Activated B cell treated with CpG ODN at 0.5 μM for 24 hours (primary cell): ENCODE measurements at regions of chr15 and their contacts with region 1.

Region 1: GRCh38 chr15:85380217-85380811 is at the start of gene AKAP13:
- DNase-seq: peak; percentile 80
- ATAC-seq: peak; percentile 81
- H3K4me3 Mint-ChIP-seq: peak within 1 kb of the TSS; percentile 93
- H3K27ac Mint-ChIP-seq: peak within 1 kb of the TSS; percentile 94
- H3K4me1 Mint-ChIP-seq: peaks cover 42% of the 10 kb centered on the region
- H3K27me3 Mint-ChIP-seq: no peaks in the 10 kb centered on the region
- CTCF ChIP-seq: no peak
- total RNA-seq, gene AKAP13: 254 and 290 TPM in 2 replicates

Region 2: DNA sequence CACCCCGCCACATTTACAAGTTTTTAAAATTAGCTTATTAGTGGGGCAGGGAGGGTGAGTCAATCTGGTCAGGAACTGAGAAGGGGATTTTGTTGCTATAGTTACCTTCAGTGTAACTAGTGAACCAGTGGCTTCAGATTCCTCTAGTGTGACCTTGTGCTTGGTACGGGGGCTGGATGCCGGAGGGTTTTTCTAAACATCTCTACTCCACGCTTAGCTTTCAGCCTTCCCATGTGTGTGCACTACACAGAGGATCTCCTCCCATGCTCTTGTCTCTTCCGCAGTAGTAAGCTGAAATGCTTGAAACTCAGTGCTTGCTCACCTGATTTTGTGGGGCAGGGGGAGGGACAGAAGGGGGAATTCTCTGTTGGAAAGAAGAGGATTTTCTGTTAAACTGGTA is 67.8 kb before region 1 on chr15:
- CTCF ChIA-PET with region 1: interaction called, 4 read pairs
- POLR2A ChIA-PET with region 1: interaction called, 51 read pairs
- intact Hi-C with region 1: no loop called
- DNase-seq: peak; percentile 53
- ATAC-seq: peak; percentile 89
- H3K4me3 Mint-ChIP-seq: peak overlapping the region; percentile 87
- H3K27ac Mint-ChIP-seq: peak overlapping the region; percentile 99
- H3K4me1 Mint-ChIP-seq: peaks cover 96% of the 10 kb centered on the region
- H3K27me3 Mint-ChIP-seq: no peaks in the 10 kb centered on the region
- CTCF ChIP-seq: no peak

Region 3: DNA sequence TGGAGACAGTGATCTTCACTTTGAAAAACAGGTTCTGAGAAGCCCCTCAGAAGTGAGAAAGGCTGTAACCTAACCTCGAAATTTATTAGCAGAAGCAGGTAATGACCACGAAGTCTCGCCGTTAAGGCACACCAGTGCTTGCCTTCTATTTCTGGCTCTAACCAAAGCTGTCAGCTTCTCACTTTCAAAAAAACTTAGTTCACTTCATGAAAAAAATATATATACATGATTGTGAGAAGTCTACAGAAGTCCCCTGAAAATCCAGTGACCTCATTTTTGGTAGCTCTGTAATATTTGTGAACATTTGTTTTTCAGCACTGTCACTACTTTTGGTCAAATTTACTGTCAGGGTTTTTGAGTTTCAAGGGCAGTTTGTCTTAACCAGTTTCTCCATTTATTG is 19.0 kb before region 1 on chr15:
- CTCF ChIA-PET with region 1: interaction called, 4 read pairs
- POLR2A ChIA-PET with region 1: interaction called, 6 read pairs
- intact Hi-C with region 1: loop called (anchors 2 kb)
- DNase-seq: no peak
- ATAC-seq: peak; percentile 23
- H3K4me3 Mint-ChIP-seq: no peak overlapping the region
- H3K27ac Mint-ChIP-seq: no peak overlapping the region
- H3K4me1 Mint-ChIP-seq: peaks cover 29% of the 10 kb centered on the region
- H3K27me3 Mint-ChIP-seq: no peaks in the 10 kb centered on the region
- CTCF ChIP-seq: no peak

Region 4: GRCh38 chr15:85407804-85408746 is 27.8 kb after region 1 on chr15:
- CTCF ChIA-PET with region 1: interaction called, 11 read pairs
- POLR2A ChIA-PET with region 1: interaction called, 395 read pairs
- intact Hi-C with region 1: loop called (anchors 1 kb)
- DNase-seq: no peak
- ATAC-seq: peak; percentile 68
- H3K4me3 Mint-ChIP-seq: peak overlapping the region; percentile 70
- H3K27ac Mint-ChIP-seq: peak overlapping the region; percentile 95
- H3K4me1 Mint-ChIP-seq: peaks cover 88% of the 10 kb centered on the region
- H3K27me3 Mint-ChIP-seq: no peaks in the 10 kb centered on the region
- CTCF ChIP-seq: no peak

Region 5: DNA sequence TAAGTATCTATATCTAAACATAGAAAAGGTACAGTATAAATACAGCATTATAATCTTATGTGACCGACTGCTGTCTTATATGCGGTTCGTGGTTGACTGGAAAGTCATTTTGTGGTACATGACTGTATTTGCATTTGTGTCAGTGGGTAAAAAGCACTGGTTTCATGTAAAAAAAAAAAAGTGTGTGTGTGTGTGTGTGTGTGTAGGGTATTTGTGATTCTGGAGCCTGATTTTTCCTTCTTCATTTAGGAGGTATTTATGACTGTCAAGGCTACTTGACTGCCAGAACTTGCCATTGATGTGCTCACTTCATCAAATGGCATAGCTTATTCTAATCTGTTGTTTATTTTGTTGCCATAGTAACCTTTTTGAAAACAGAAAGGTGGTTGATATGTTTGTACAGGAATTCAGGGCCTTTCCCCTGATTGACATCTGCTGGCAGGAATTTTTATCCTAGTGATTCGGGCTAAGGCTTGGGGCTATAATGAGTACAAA is 63.3 kb after region 1 on chr15:
- CTCF ChIA-PET with region 1: no interaction called
- POLR2A ChIA-PET with region 1: interaction called, 3 read pairs
- intact Hi-C with region 1: loop called (anchors 2 kb)
- DNase-seq: no peak
- ATAC-seq: peak; percentile 73
- H3K4me3 Mint-ChIP-seq: peak overlapping the region; percentile 50
- H3K27ac Mint-ChIP-seq: peak overlapping the region; percentile 77
- H3K4me1 Mint-ChIP-seq: peaks cover 72% of the 10 kb centered on the region
- H3K27me3 Mint-ChIP-seq: no peaks in the 10 kb centered on the region
- CTCF ChIP-seq: no peak

Region 6: GRCh38 chr15:85480923-85481322 is 100.6 kb after region 1 on chr15:
- CTCF ChIA-PET with region 1: no interaction called
- POLR2A ChIA-PET with region 1: interaction called, 14 read pairs
- intact Hi-C with region 1: no loop called
- DNase-seq: no peak
- ATAC-seq: peak; percentile 46
- H3K4me3 Mint-ChIP-seq: peak overlapping the region; percentile 38
- H3K27ac Mint-ChIP-seq: no peak overlapping the region
- H3K4me1 Mint-ChIP-seq: peaks cover 85% of the 10 kb centered on the region
- H3K27me3 Mint-ChIP-seq: no peaks in the 10 kb centered on the region
- CTCF ChIP-seq: no peak